Psoas muscle (tissue), 8 donors: ENCODE measurements at regions of chr19 and their contacts with region 1.

Region 1: GRCh38 chr19:33977756-33978685 is 181.4 kb downstream of the KCTD15 start:
- DNase-seq: no peak
- ATAC-seq: no peak
- H3K4me3 ChIP-seq: no peak overlapping the region
- H3K27ac ChIP-seq: no peak overlapping the region
- H3K4me1 ChIP-seq: no peaks in the 10 kb centered on the region
- H3K27me3 ChIP-seq: peaks cover 0 to 2% (median 0%) of the 10 kb centered on the region in 3 donors
- CTCF ChIP-seq: no peak

Region 2: DNA sequence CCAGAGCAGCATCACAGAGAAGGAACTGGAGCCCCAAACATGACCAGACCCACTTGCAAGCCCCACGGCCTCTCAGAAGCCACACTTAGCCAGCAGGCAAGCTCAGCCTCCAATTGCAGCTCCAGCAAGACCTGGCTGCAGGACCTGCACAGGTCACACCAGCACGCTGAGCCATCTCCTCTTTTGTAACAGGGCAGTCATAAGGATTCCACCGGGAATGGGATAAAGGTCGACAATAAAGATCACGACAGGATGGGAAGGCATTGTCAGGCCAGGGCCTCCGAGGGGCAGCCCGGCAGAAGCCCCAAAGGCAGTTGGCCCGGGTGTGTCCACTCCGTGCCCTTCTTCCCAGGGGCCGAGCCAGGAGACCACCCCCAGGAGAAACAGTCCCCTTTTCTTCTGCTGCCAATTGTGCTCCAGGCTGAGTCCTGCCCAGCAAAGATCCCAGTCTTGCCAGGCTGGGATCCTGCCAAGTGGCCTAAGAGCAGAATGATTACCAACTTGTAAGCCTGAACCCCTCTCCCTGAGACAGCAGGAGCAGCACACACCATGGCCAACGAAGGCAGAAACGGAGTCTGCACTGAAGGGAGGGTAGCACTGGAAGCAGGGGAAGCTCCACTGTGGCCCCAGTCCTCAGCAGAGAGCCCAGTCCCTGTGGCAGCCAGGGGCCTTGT is 468.9 kb before region 1 on chr19:
- intact Hi-C with region 1: loop called in 1 of 2 experiments (anchors 5 kb)
- DNase-seq: no peak
- ATAC-seq: peak in 2 of 4 donors; percentile 82 to 84
- H3K4me3 ChIP-seq: no peak overlapping the region
- H3K27ac ChIP-seq: no peak overlapping the region
- H3K4me1 ChIP-seq: peaks cover 5% of the 10 kb centered on the region
- H3K27me3 ChIP-seq: no peaks in the 10 kb centered on the region
- CTCF ChIP-seq: no peak

Region 3: GRCh38 chr19:33947265-33947964 is 30.6 kb before region 1 on chr19:
- intact Hi-C with region 1: no loop called
- DNase-seq: no peak
- ATAC-seq: no peak
- H3K4me3 ChIP-seq: no peak overlapping the region
- H3K27ac ChIP-seq: no peak overlapping the region
- H3K4me1 ChIP-seq: no peaks in the 10 kb centered on the region
- H3K27me3 ChIP-seq: no peaks in the 10 kb centered on the region
- CTCF ChIP-seq: no peak

Region 4: DNA sequence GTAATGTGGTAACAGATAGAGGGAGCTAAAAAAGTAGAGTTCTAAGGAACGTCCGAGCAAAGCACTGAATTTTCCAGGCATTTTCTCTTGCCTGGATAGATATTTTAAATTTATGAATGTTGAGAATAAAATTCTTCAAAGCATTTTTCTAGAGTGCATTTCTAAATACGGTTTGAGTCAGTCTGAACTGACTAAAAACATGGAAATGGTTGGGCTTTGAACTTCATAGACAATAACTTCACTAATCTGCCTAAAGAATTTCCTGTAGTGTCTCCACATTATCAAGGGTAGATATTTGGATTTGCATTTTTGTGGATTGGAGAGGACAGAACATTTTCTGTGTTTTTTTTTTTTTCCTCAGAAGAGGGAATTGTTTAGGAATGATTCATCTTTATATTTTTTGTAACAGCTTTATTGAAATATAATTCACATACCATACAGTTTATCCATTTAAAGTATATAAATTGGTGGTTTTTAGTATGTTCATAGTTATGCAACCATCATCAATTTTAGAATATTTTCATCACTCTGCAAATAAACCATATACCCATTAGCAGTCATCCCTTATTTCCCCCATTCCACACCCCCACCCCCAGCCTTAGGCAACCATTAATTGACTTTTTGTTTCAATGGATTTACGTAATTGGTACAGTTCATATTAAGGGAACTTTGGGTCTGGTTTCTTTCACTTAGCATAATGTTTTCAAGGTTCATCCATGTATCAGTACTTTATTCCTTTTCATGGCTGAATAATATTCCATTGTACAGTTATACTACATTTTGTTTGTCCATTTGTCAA is 297.0 kb after region 1 on chr19:
- intact Hi-C with region 1: no loop called
- DNase-seq: no peak
- ATAC-seq: no peak
- H3K4me3 ChIP-seq: no peak overlapping the region
- H3K27ac ChIP-seq: peak overlapping the region; percentile 20
- H3K4me1 ChIP-seq: peaks cover 51% of the 10 kb centered on the region
- H3K27me3 ChIP-seq: no peaks in the 10 kb centered on the region
- CTCF ChIP-seq: no peak